Heart right ventricle (tissue), 16 donors: ENCODE measurements at regions of chr6 and their contacts with region 1.

Region 1: GRCh38 chr6:163285691-163286090 is 128.8 kb upstream of the QKI start:
- DNase-seq: no peak
- ATAC-seq: no peak
- H3K4me3 ChIP-seq: no peak overlapping the region
- H3K27ac ChIP-seq: peak overlapping the region in 2 of 10 donors; percentile 30 to 41
- H3K4me1 ChIP-seq: peaks cover 0 to 24% (median 5%) of the 10 kb centered on the region in 9 donors
- H3K27me3 ChIP-seq: no peaks in the 10 kb centered on the region
- CTCF ChIP-seq: no peak

Region 2: DNA sequence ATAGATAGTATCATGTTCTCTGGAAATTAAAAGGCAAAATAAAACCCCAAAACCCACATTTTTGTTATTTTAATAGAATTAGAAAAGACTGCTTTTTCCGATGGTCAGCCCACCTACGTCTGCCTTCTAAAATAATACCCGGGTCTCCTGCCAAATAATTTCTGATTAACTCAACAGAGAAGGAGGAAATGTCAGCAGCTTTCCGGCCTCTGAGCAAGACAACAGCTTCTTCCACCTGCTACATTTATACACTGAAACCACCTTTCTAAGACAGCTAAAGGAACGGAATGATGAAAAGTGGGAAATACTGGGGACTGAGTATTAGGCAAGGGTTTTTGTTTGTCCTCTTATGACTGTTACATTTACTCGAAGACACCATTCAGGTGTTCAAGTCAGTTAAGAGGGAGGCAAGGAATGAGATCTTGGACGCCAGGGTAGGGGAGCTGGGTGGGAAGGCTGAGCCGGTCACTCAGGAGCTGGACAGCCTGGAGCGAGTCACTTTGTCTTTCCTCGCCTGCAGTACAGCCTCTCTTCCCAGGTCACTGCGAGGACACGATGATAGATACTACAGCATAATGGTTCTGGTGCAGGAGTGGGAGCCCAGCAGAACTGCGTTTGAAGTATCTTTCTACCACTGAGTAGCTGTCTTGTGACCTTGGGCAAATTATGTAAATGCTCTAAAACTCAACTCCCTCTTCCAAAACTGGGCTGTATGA is 32.5 kb after region 1 on chr6:
- intact Hi-C with region 1: loop called in 1 of 10 experiments (anchors 1 kb)
- DNase-seq: no peak
- ATAC-seq: peak in 7 of 8 donors; percentile 53 to 82 (median 63)
- H3K4me3 ChIP-seq: peak overlapping the region in 1 of 10 donors; percentile 10
- H3K27ac ChIP-seq: peak overlapping the region in 8 of 10 donors; percentile 2 to 61 (median 46)
- H3K4me1 ChIP-seq: peaks cover 5 to 50% (median 30%) of the 10 kb centered on the region in 9 donors
- H3K27me3 ChIP-seq: no peaks in the 10 kb centered on the region
- CTCF ChIP-seq: no peak

Region 3: DNA sequence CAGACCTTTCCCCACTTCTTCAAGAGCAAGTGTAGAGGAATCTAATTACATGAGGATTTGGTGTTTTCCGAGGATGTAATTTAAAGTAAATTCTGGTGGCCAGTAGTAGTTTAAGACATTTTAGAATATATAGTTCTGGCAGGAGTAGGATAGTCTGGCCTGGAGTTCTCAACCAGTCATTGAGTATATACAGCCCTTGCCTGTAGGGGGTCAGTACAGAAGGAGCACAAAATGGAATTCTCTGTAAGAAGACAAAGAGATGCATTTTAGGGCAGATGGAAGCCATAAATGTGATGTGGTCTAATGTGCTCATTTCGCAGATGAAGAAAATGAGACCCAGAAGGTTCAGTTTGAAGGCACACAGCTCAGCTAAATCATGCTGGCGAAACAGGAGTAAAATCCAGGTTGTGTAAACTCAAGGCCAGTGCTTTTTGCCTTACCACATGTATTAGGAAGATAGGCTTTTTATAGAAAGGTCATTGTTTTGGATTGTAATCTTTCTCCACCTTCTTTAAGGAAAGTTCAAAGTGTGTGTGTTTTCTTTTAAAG is 158.4 kb after region 1 on chr6:
- intact Hi-C with region 1: no loop called
- DNase-seq: no peak
- ATAC-seq: peak in 2 of 8 donors; percentile 10 to 28
- H3K4me3 ChIP-seq: no peak overlapping the region
- H3K27ac ChIP-seq: peak overlapping the region in 1 of 10 donors; percentile 6
- H3K4me1 ChIP-seq: peaks cover 14 to 100% (median 98%) of the 10 kb centered on the region in 9 donors
- H3K27me3 ChIP-seq: no peaks in the 10 kb centered on the region
- CTCF ChIP-seq: peak in 1 of 9 donors; percentile 7